Activated CD4-positive, alpha-beta T cell treated with anti-CD3 and anti-CD28 coated beads for 36 hours (primary cell): ENCODE measurements at regions of chr4 and their contacts with region 1.

Region 1: DNA sequence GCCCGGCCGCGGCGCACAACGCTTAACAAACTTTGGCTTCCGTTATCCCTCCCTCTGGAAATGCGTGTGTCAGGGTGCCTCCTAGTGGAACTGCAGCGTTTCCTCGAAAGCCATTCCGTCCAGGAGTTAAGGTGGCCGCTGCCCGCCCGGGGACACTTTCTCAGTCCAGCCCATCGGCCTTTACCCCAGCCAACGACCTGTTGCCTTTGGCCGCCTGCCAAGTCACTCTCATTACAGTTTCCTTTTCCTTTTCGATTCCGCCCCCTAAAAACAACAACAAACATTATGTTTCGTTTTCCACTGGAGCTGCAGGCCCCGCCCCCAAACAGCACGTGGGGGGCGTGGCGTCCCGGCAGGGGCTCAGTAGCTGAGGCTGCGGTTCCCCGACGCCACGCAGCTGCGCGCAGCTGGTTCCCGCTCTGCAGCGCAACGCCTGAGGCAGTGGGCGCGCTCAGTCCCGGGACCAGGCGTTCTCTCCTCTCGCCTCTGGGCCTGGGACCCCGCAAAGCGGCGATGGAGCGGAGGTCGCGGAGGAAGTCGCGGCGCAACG is at the start of gene HERC5:
- DNase-seq: peak; percentile 94
- ATAC-seq: peak; percentile 94
- H3K4me3 Mint-ChIP-seq: peak within 1 kb of the TSS; percentile 87
- H3K27ac Mint-ChIP-seq: peak within 1 kb of the TSS; percentile 100
- H3K4me1 Mint-ChIP-seq: peaks cover 7% of the 10 kb centered on the region
- H3K27me3 Mint-ChIP-seq: no peaks in the 10 kb centered on the region
- total RNA-seq, gene HERC5: 21.1 TPM

Region 2: DNA sequence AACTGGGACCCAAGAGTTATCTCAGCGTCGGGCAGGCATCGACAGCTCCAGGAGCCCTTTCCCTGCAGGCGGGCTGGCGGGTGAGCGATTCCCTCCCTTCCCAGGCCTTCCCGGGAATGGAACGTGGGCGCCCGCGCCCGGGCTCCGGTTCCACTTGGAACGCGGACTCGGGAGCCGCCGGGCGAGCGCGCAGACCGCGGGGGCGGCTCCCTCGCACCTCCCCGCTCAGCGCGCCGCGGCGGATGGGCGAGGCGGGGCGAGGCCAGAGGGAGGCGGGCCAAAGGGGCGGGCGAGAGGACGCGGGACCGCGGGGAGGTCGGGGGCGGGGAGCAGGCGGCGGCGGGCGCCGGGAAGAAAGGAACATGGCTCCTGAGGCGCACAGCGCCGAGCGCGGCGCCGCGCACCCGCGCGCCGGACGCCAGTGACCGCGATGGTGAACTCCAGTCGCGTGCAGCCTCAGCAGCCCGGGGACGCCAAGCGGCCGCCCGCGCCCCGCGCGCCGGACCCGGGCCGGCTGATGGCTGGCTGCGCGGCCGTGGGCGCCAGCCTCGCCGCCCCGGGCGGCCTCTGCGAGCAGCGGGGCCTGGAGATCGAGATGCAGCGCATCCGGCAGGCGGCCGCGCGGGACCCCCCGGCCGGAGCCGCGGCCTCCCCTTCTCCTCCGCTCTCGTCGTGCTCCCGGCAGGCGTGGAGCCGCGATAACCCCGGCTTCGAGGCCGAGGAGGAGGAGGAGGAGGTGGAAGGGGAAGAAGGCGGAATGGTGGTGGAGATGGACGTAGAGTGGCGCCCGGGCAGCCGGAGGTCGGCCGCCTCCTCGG is 449.3 kb before region 1 on chr4 and contains the start of gene PKD2:
- CTCF ChIA-PET with region 1: no interaction called
- POLR2A ChIA-PET with region 1: no interaction called
- intact Hi-C with region 1: loop called in 1 of 2 experiments (anchors 2 kb)
- DNase-seq: peak; percentile 89
- ATAC-seq: peak; percentile 92
- H3K4me3 Mint-ChIP-seq: peak within 1 kb of the TSS; percentile 84
- H3K27ac Mint-ChIP-seq: peak within 1 kb of the TSS; percentile 72
- H3K4me1 Mint-ChIP-seq: peaks cover 32% of the 10 kb centered on the region
- H3K27me3 Mint-ChIP-seq: peaks cover 5% of the 10 kb centered on the region
- total RNA-seq, gene PKD2: 4.1 to 5.0 TPM

Region 3: DNA sequence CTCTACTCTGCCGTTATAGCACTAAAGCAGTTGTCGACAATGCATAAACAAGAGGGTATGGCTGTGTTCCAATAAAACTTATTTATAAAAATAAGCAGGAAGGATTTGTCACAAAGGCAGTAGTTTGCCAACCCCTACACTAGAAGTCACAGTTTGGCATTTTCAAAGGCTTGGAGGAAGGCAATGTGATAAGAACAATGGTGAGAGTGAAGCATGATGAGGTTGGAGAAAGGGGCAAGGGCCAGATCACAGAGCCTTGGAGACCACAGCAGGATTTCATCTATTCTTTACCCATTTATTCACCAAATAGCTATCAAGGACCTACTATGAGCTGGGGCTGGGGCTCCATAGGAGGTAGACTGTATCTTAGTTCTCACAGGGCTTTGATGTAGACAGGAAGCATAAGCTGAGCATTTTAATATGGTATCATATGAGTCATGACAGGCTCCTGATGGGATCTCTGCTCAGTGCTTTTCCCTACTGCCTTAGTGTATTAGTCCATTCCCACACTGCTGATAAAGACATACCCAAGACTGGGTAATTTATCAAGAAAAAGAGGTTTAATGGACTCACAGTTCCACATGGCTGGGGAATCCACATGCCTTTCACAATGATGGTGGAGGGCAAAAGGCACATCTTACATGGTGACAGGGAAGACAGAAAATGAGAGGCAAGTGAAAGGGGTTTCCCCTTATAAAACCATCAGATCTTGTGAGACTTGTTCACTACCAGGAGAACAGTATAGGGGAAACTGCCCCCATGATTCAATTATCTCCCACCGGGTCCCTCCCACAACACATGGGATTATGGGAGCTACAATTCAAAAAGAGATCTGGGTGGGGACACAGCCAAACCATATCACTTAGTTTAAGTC is 231.4 kb before region 1 on chr4:
- CTCF ChIA-PET with region 1: no interaction called
- POLR2A ChIA-PET with region 1: no interaction called
- intact Hi-C with region 1: loop called in 1 of 2 experiments (anchors 5 kb)
- DNase-seq: peak; percentile 12
- ATAC-seq: peak; percentile 88
- H3K4me3 Mint-ChIP-seq: no peak overlapping the region
- H3K27ac Mint-ChIP-seq: no peak overlapping the region
- H3K4me1 Mint-ChIP-seq: peaks cover 10% of the 10 kb centered on the region
- H3K27me3 Mint-ChIP-seq: no peaks in the 10 kb centered on the region

Region 4: GRCh38 chr4:88297725-88298454 is 158.9 kb before region 1 on chr4:
- CTCF ChIA-PET with region 1: no interaction called
- POLR2A ChIA-PET with region 1: no interaction called
- intact Hi-C with region 1: no loop called
- DNase-seq: no peak
- ATAC-seq: no peak
- H3K4me3 Mint-ChIP-seq: no peak overlapping the region
- H3K27ac Mint-ChIP-seq: no peak overlapping the region
- H3K4me1 Mint-ChIP-seq: no peaks in the 10 kb centered on the region
- H3K27me3 Mint-ChIP-seq: no peaks in the 10 kb centered on the region

Region 5: GRCh38 chr4:88341227-88342192 is 115.3 kb before region 1 on chr4:
- CTCF ChIA-PET with region 1: no interaction called
- POLR2A ChIA-PET with region 1: no interaction called
- intact Hi-C with region 1: no loop called
- DNase-seq: no peak
- ATAC-seq: no peak
- H3K4me3 Mint-ChIP-seq: no peak overlapping the region
- H3K27ac Mint-ChIP-seq: no peak overlapping the region
- H3K4me1 Mint-ChIP-seq: no peaks in the 10 kb centered on the region
- H3K27me3 Mint-ChIP-seq: no peaks in the 10 kb centered on the region

Region 6: GRCh38 chr4:88378691-88379559 is 77.9 kb before region 1 on chr4 and contains the start of gene HERC6:
- CTCF ChIA-PET with region 1: interaction called, 4 read pairs
- POLR2A ChIA-PET with region 1: interaction called, 3 read pairs
- intact Hi-C with region 1: loop called (anchors 1 kb)
- DNase-seq: peak; percentile 88
- ATAC-seq: peak; percentile 47
- H3K4me3 Mint-ChIP-seq: peak within 1 kb of the TSS; percentile 75
- H3K27ac Mint-ChIP-seq: peak within 1 kb of the TSS; percentile 84
- H3K4me1 Mint-ChIP-seq: peaks cover 39% of the 10 kb centered on the region
- H3K27me3 Mint-ChIP-seq: no peaks in the 10 kb centered on the region
- total RNA-seq, gene HERC6: 7.3 to 9.3 TPM

Region 7: DNA sequence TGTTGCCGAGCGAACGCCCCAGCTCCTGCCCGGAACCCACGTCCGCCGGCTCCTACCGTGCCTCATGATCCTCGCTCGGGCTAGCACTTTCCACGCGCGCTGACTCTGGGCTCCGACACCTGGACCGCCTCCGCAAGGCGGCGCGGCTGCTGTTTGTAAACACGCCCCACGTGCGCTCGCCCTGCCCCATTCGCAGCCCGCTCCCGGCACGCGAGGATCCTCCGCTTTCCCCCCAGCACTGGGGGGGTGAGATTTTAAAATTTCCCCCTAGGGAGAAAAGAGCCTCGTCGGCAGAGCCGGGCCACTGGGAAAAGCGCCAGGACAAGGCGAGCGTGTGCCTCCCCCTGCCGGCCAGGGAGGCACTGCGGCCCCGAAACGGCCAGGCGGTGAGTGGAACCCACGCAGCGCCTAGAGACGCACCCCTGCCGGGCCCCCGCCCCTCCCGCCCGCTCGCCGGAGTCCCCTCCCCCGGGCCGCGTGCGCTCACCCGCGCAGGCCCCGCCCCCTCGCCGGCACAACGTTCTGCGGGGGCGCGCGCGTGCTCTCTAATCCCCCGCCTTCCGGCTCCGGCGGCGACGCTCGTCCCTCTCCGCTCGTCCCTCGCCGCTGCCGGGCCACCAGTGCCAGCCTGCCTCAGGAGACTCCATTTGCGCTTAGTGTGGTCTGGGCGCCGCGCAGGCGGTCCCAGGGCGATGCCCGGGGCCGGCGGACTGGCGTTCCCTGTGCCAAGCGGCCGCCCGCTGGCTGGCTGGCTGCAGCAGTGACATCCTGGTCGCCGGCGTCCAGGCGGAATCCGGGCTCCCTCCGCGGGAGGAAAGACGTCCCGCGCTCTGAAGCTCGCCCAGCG is 654.4 kb after region 1 on chr4 and contains the start of gene TIGD2:
- CTCF ChIA-PET with region 1: no interaction called
- POLR2A ChIA-PET with region 1: no interaction called
- intact Hi-C with region 1: loop called in 1 of 2 experiments (anchors 1 kb)
- DNase-seq: peak; percentile 93
- ATAC-seq: peak; percentile 95
- H3K4me3 Mint-ChIP-seq: peak within 1 kb of the TSS; percentile 73
- H3K27ac Mint-ChIP-seq: peak within 1 kb of the TSS; percentile 86
- H3K4me1 Mint-ChIP-seq: peaks cover 18% of the 10 kb centered on the region
- H3K27me3 Mint-ChIP-seq: peaks cover 16% of the 10 kb centered on the region
- total RNA-seq, gene TIGD2: 2.1 to 2.3 TPM